Cardiac septum (tissue), 1 donor: ENCODE measurements at regions of chr17 and their contacts with region 1.

Region 1: DNA sequence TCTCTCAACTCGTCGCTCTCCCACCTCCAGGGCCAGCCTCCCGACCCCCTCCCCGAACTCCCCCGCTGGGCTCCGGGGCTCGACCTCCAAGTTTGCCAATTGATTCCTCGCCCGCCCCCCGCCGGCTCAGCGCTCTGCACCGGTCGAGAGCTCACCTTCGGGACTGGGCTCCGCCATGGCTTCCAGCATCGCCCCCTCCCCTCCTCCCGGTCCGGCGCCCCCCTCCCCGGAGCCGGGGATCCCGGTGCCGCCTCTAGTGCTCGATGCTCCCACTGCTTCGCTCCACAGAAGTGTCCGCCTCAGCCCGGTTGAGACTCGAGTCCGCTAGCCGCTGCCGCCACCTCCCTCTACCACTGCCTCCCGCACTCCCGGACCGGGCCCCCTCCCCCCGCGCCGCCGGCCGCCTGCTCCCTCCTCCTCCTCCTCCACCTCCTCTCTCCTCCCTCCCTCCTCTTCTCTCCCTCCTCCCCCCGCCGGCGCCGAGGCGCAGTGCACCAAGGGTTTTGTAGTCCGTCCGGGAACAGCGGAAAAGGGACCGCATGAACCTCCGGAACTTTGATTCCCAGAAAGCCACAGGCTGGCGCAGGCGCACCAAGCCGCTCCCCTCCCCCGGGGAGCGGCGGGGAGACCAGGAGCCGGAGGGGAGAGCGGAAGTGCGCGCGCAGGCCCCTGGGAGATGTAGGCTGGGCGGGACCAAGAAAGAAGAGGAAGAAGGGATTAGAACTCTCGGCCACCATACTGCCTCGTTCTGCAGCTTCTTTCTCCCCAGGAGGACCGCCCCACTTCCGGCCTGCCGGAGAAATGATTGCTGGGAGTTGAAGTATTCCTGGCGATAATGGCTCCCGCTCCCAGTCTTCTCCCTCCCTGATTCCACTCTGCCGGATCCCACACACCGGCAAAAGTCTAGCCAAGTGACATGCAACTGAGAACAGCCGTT is at the start of gene PHF23:
- DNase-seq: peak; percentile 100
- total RNA-seq, gene PHF23: 20.5 TPM

Region 2: GRCh38 chr17:7021993-7022778 is 217.2 kb before region 1 on chr17:
- intact Hi-C with region 1: no loop called
- DNase-seq: peak; percentile 89

Region 3: GRCh38 chr17:7219812-7220581 is 19.4 kb before region 1 on chr17 and contains the starts of genes ACADVL and DLG4:
- intact Hi-C with region 1: loop called (anchors 2 kb)
- DNase-seq: peak; percentile 96
- total RNA-seq, gene ACADVL: 966 TPM
- total RNA-seq, gene DLG4: 16.0 TPM